H1 (cell line): ENCODE measurements at regions of chr2 and their contacts with region 1.

Region 1: DNA sequence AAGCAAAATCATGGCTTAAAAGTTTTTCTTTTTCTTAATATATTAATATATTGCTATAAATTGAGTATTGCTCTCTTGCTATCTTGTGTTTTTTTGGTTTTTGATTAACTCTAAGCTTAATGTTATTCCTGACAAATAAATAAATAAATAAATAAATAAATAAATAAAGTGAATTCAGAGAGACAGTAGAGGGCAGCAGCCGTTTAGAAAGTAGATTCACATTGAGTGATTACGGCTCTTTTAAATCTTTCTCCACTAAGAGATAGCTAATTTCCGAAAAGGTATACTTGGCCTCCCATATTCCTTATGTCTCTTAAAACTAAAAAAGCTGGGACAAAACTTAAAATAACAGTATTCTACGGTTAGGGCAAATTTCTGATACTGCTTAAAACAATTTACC is 34.3 kb downstream of the MSH2 start:
- DNase-seq: no peak
- H3K4me3 ChIP-seq: no peak overlapping the region
- H3K27ac ChIP-seq: no peak overlapping the region
- H3K4me1 ChIP-seq: no peaks in the 10 kb centered on the region
- H3K27me3 ChIP-seq: no peaks in the 10 kb centered on the region
- CTCF ChIP-seq: no peak; a peak in 1 of 4 replicates
- EP300 ChIP-seq: no peak
- POLR2A ChIP-seq: no peak
- RAD21 ChIP-seq: peak; percentile 38 to 47

Region 2: GRCh38 chr2:47422560-47422959 is 14.7 kb before region 1 on chr2:
- CTCF ChIA-PET with region 1: interaction called, 12 read pairs
- POLR2A ChIA-PET with region 1: interaction called, 10 read pairs
- DNase-seq: no peak
- H3K4me3 ChIP-seq: no peak overlapping the region
- H3K27ac ChIP-seq: no peak overlapping the region
- H3K4me1 ChIP-seq: no peaks in the 10 kb centered on the region
- H3K27me3 ChIP-seq: no peaks in the 10 kb centered on the region
- CTCF ChIP-seq: no peak
- EP300 ChIP-seq: no peak
- POLR2A ChIP-seq: no peak
- RAD21 ChIP-seq: no peak

Region 3: DNA sequence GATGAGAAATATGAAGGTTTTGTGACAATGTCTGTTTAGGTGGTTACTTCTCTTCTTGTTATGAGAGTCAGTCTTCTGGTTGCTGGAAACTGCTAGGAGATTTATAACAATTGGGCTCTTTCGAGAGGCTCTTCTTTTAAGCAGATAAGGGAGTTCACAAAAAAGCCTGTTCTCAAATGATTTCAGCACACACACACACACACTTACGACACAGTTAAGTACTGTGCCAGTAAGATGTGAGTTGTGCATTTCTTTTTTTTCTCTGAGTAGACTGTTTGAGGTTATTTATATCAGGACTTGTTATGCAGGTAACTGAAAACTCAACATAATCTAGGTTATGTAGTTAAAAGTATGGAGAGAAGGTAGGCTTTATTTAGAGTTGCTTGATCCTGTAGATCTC is 15.5 kb after region 1 on chr2:
- CTCF ChIA-PET with region 1: interaction called, 11 read pairs
- POLR2A ChIA-PET with region 1: interaction called, 7 read pairs
- DNase-seq: no peak
- H3K4me3 ChIP-seq: no peak overlapping the region
- H3K27ac ChIP-seq: no peak overlapping the region
- H3K4me1 ChIP-seq: no peaks in the 10 kb centered on the region
- H3K27me3 ChIP-seq: no peaks in the 10 kb centered on the region
- CTCF ChIP-seq: no peak
- EP300 ChIP-seq: no peak
- POLR2A ChIP-seq: no peak
- RAD21 ChIP-seq: no peak

Region 4: DNA sequence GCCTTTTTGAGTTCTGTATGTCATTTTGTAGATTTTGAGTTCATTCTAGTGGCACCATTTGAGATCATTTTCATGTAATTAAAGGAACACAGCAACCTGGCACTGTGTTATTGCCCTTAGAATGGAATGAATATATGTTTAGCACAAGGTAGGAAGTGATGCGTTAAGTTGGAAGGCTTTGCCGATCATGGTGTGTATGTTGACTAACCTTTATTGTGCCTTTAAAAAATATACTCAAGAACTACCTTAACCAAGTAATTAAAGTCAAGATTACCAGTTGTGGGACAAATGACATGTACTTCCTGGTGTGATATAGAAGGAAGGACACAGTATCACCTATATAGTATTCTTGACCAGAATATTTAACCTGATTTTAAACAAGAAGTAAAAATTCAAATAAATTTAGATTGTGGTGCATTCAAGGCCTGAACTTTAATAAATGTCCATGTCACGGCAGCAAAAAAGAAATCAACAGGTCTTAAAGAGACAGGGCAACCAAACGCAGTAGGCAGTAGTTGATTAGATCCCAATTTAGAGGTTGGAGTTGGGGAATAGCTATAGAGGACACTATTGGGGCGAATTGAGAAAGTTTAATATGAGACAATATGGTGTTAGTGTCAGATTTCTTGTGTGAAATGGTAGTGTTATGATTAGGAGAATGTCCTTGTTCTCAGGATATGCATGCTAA is 34.3 kb after region 1 on chr2:
- CTCF ChIA-PET with region 1: no interaction called
- POLR2A ChIA-PET with region 1: no interaction called
- DNase-seq: no peak
- H3K4me3 ChIP-seq: no peak overlapping the region
- H3K27ac ChIP-seq: no peak overlapping the region
- H3K4me1 ChIP-seq: no peaks in the 10 kb centered on the region
- H3K27me3 ChIP-seq: no peaks in the 10 kb centered on the region
- CTCF ChIP-seq: no peak
- EP300 ChIP-seq: no peak
- POLR2A ChIP-seq: no peak
- RAD21 ChIP-seq: no peak